Endothelial cell of umbilical vein (primary cell): ENCODE measurements at regions of chr14 and their contacts with region 1.

Region 1: DNA sequence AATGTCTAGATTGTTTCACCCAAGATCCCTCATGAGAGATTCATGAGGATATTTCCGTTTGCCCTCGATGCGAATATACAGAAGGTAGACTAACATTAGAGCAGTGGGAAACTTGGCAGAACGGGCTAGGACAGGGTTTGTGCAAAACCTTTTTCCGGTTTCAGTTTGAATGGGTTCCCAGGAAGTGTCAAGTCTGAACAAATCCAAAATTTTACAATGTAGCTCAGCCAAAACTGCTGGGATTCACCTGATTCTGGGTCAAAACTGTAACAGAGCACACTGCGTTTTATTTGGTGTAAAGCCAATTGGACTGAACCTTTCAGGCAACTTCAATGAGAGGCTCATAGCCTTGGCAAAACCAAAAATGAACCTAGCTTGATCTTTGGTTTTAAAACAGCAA is 337.8 kb upstream of the DIO2 start:
- DNase-seq: no peak
- H3K4me3 ChIP-seq: no peak overlapping the region
- H3K27ac ChIP-seq: no peak overlapping the region
- H3K4me1 ChIP-seq: peaks cover 8% of the 10 kb centered on the region
- H3K27me3 ChIP-seq: no peaks in the 10 kb centered on the region
- CTCF ChIP-seq: no peak
- POLR2A ChIP-seq: no peak

Region 2: DNA sequence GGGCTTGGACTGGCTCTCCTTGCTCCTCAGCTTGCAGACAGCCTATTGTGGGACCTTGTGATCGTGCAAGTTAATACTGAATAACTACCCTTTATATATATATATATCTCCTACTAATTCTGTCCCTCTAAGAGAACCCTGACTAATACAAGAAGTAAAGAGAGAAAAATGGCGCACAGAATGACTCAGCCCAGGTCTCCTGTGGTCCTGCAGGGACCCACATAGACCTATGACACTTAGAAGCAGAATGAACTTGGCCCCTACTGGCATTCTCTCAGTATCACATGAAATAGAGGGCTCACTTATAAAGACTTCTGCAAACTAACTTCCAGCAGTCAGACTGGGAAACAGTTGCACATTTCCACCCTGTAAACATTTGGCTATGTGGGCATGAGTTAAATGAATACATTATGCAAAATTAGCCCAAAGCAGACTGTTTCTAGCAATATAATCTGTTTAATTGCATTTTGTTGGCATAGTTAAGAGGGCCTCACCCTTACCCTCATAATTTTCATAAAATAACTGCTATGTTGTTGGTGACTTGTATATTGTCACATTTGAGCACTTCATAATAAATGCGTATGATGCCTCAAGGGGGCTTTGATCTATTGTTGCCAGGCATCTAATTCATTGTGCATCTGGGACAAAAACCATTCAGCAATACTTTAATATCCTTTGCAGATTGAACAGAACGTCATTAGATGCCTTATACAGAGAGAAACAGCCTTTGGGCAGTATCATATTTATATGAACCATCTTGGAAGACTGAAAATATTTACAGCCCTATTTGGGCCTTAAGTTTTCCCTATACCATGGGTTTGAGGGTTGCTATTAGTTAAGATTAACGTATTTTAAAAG is 11.9 kb after region 1 on chr14:
- CTCF ChIA-PET with region 1: interaction called, 12 read pairs
- POLR2A ChIA-PET with region 1: no interaction called
- dilution Hi-C with region 1: no loop called
- intact Hi-C with region 1: no loop called
- DNase-seq: no peak
- H3K4me3 ChIP-seq: no peak overlapping the region
- H3K27ac ChIP-seq: no peak overlapping the region
- H3K4me1 ChIP-seq: no peaks in the 10 kb centered on the region
- H3K27me3 ChIP-seq: no peaks in the 10 kb centered on the region
- CTCF ChIP-seq: no peak
- POLR2A ChIP-seq: no peak